CD4-positive, alpha-beta T cell (primary cell): ENCODE measurements at regions of chr20 and their contacts with region 1.

Region 1: DNA sequence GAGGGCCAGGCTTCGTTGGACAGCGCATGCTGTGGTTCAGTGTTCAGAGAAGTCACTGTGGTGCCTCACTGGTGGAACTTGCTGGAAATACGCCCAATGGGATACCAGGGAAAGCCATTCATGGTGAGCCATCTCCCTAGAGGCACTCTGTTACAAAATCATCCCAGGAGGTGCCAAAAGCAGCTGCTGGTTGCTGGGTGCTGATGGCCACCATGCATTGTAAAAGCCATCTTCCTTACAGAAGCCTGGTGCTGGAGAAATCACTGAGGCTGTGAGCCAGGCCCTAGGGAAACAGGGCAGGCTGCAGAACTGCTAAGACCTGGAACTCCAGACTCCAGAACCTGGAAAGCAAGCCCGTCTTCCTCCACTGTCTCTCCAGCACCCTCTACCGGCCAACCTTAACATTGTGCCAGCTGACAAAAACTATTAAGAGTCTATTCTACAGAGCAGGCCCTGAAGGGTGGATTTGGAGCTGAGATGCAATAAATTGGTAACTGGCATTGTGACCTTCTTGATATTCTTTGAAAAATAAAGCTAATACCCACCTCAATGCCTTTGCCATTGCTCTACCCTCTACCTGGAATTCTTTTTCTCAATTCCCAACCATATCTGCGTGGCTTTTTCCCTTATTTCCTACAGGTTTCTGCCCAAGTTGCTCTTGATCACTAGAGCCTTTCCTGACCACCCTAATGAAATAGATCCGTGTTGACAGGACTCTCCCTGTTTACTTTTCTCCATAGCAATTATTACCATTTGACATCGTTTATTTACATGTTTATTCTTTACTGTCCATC is 18.5 kb downstream of the SNRPB start:
- DNase-seq: peak; percentile 38 to 75 (median 55)
- ATAC-seq: peak; percentile 76
- H3K4me3 ChIP-seq: no peak overlapping the region
- H3K4me3 Mint-ChIP-seq: no peak overlapping the region
- H3K27ac ChIP-seq: no peak overlapping the region
- H3K27ac Mint-ChIP-seq: no peak overlapping the region
- H3K4me1 ChIP-seq: peaks cover 2% of the 10 kb centered on the region
- H3K4me1 Mint-ChIP-seq: peaks cover 6% of the 10 kb centered on the region
- H3K27me3 ChIP-seq: no peaks in the 10 kb centered on the region
- H3K27me3 Mint-ChIP-seq: no peaks in the 10 kb centered on the region
- CTCF ChIP-seq: peak; percentile 66

Region 2: GRCh38 chr20:1965520-1966351 is 486.4 kb before region 1 on chr20:
- CTCF ChIA-PET with region 1: no interaction called
- POLR2A ChIA-PET with region 1: no interaction called
- intact Hi-C with region 1: loop called (anchors 2 to 5 kb)
- DNase-seq: peak; percentile 51 to 82 (median 66)
- ATAC-seq: peak; percentile 55
- H3K4me3 ChIP-seq: peak overlapping the region; percentile 30
- H3K4me3 Mint-ChIP-seq: peak overlapping the region; percentile 23
- H3K27ac ChIP-seq: no peak overlapping the region
- H3K27ac Mint-ChIP-seq: no peak overlapping the region
- H3K4me1 ChIP-seq: peaks cover 9% of the 10 kb centered on the region
- H3K4me1 Mint-ChIP-seq: peaks cover 6% of the 10 kb centered on the region
- H3K27me3 ChIP-seq: peaks cover 3 to 18% of the 10 kb centered on the region in 2 experiments
- H3K27me3 Mint-ChIP-seq: peaks cover 52% of the 10 kb centered on the region
- CTCF ChIP-seq: peak; percentile 95

Region 3: GRCh38 chr20:2206957-2207769 is 245.0 kb before region 1 on chr20:
- CTCF ChIA-PET with region 1: no interaction called
- POLR2A ChIA-PET with region 1: no interaction called
- intact Hi-C with region 1: loop called (anchors 2 kb)
- DNase-seq: peak; percentile 19 to 79 (median 42)
- ATAC-seq: peak; percentile 71
- H3K4me3 ChIP-seq: peak overlapping the region; percentile 67
- H3K4me3 Mint-ChIP-seq: peak overlapping the region; percentile 82
- H3K27ac ChIP-seq: no peak overlapping the region
- H3K27ac Mint-ChIP-seq: no peak overlapping the region
- H3K4me1 ChIP-seq: peaks cover 17% of the 10 kb centered on the region
- H3K4me1 Mint-ChIP-seq: peaks cover 7% of the 10 kb centered on the region
- H3K27me3 ChIP-seq: peaks cover 8 to 26% of the 10 kb centered on the region in 2 experiments
- H3K27me3 Mint-ChIP-seq: peaks cover 5% of the 10 kb centered on the region
- CTCF ChIP-seq: peak; percentile 72

Region 4: DNA sequence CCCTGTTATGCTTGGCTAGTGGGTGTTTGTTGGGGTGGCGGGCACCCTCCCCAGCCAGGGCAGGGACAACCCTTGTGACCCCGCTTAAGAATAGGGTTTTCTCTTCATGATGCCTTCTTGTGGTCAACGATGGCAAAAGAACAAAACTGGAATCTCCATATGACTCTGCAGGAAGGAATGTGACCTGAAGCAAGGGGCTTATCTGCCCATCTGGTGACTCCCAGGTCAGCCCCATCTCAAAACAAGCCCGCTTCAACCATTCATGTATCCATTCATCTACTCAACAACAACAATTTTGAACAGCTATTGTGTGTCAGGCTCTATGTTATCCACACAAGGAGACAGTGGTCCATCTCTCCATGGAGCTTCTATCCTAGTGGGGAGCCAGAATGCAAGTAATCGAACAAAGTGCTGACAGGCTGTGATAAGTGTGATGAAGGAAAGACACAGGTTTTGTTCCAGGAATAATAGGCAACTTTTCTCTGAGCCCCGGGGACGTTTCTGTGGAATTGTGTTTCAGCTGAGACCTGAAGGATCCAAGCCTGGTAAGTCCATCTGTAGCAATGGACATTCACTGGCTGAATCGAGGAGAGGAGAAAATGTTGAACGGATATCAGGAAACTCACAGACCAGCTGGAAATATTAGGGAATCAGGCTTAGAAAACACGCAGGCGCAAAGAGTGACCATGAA is 102.2 kb before region 1 on chr20:
- CTCF ChIA-PET with region 1: no interaction called
- POLR2A ChIA-PET with region 1: no interaction called
- intact Hi-C with region 1: loop called in 1 of 2 experiments (anchors 2 kb)
- DNase-seq: no peak
- ATAC-seq: no peak
- H3K4me3 ChIP-seq: no peak overlapping the region
- H3K4me3 Mint-ChIP-seq: no peak overlapping the region
- H3K27ac ChIP-seq: no peak overlapping the region
- H3K27ac Mint-ChIP-seq: no peak overlapping the region
- H3K4me1 ChIP-seq: peaks cover 9% of the 10 kb centered on the region
- H3K4me1 Mint-ChIP-seq: no peaks in the 10 kb centered on the region
- H3K27me3 ChIP-seq: peaks cover 5 to 14% of the 10 kb centered on the region in 2 experiments
- H3K27me3 Mint-ChIP-seq: peaks cover 37% of the 10 kb centered on the region
- CTCF ChIP-seq: no peak